Posterior vena cava (tissue), 2 donors: ENCODE measurements at regions of chr1 and their contacts with region 1.

Region 1: GRCh38 chr1:177933881-177934280 is 36.0 kb downstream of the SEC16B start:
- DNase-seq: no peak

Region 2: GRCh38 chr1:176983731-176984130 is 950.1 kb before region 1 on chr1:
- intact Hi-C with region 1: loop called in 1 of 2 experiments (anchors 5 kb)
- DNase-seq: no peak

Region 3: DNA sequence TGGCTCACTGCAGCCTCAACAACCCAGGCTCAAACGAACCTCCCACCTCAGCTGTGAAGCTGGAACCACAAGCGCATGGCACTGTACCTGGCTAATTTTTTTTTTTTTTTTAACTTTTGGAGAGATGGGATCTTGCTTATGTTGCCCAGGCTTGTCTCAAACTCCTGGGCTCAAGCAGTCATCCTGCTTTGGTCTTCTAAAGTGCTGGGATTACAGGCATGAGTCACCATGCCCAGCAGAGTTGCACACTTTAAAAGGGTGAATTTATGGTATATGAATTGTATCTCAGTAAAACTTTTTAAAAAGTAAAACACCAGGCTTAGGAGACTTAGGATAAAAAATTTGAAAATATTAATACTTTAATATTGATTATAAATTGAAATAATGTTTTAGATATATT is 463.8 kb after region 1 on chr1:
- intact Hi-C with region 1: no loop called
- DNase-seq: no peak